KBM-7 (cell line): ENCODE measurements at regions of chrX and their contacts with region 1.

Region 1: DNA sequence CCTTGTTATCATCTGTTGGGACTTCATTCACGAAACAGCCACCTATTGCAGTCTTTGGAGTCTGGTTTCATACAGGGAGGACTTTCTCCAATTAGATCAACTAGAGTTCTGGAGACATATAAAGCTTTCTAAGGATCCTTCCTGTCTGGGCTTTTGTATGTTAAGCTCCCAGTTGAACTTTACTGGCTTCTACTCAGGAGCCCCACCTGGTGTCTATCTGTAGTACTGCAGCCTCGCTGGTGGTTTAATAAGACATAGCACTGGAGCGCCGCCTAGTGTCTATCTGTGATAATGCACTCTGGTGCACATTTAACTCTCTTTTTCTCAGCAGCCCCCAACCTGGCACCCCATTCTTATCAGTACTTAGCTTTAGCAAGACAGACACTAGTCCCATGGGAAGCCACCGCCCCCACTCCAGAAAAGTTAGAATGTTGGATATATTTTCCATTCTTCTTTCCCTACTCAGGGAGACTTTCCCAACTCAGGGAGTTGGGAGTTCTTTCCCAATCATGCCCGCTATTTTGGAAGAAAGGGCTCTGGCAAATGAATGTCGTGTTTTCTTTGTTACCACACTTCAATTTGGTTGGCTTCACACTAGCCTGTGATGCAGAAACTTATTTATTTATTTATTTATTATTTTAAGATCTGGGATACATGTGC is 36.9 kb upstream of the SYTL4 start:
- DNase-seq: peak; percentile 91

Region 2: DNA sequence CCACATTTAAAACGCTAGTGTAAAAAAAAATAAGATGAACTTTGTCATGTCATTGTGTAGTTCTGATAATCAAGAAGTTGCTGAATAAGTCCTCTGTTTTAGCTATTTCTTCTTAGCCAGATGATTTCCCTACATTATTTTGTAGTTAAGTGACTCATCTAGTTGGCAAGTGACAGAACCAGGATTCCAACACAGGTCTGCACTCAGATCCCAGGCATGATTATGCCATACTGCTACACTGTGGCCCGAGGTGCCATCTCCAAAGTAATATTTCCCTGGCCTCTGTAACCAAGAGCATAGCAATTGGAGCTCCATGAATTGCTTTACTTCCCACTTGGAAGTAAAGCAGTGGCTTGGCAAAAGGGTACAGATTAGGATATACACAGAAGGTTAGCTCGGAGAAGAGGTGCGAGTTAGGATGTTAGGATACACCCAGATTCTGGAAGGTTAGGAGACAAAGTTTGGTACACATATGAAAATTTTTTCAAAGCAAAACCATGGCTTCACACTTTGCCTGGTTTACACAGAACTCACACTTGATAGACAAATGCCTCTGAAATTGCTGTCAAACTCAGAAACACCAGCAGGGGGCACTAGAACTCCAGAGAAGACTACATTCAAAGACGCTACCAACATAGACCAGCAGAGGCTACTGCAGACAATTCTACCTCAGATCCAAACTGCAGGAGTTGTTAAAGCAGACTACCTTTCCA is 83.4 kb before region 1 on chrX:
- in situ Hi-C with region 1: loop called (anchors 10 kb)
- DNase-seq: peak; percentile 92